ENCODE measurements at regions of chr16 and their contacts with region 1.

Region 1: GRCh38 chr16:15055141-15056053 is 477 bp downstream of the NTAN1 start:
- DNase-seq: peak; percentile 19 to 30
- ATAC-seq: peak; percentile 49 to 60
- H3K4me3 ChIP-seq: peak overlapping the region; percentile 99
- H3K27ac ChIP-seq: peak overlapping the region; percentile 85 to 97
- H3K4me1 ChIP-seq: no peaks in the 10 kb centered on the region
- CTCF ChIP-seq: peak; percentile 44
- EP300 ChIP-seq: no peak
- POLR2A ChIP-seq: peak; percentile 57
- RAD21 ChIP-seq: no peak

Region 2: DNA sequence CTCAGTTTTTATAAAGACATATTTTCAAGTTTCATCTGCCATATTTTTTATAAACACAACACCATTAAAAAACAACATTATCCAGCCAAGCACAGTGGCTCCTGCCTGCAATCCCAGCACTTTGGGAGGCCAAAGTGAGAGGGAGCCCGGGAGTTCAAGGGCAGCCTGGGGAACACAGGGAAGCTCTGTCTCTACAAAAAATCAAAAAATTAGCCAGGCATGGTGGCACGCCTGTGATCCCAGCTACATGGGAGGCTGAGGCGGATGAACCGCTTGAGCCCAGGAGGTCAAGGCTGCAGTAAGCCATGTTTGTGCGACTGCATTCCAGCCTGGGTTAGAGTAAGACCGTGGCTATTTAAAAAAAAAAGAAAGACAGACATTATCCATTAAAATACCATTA is 17.7 kb after region 1 on chr16:
- CTCF ChIA-PET with region 1: interaction called, 12 read pairs
- POLR2A ChIA-PET with region 1: no interaction called
- DNase-seq: no peak
- ATAC-seq: no peak
- H3K4me3 ChIP-seq: no peak overlapping the region
- H3K27ac ChIP-seq: no peak overlapping the region
- H3K4me1 ChIP-seq: no peaks in the 10 kb centered on the region
- CTCF ChIP-seq: no peak
- EP300 ChIP-seq: no peak
- POLR2A ChIP-seq: no peak
- RAD21 ChIP-seq: no peak

Measured in A549 (cell line).